Activated T-helper 2 cell treated with anti-CD3 and anti-CD28 coated beads, Interferon-gamma antibody, Interleukin-2, Interleukin-4, amounts not matched to agents 10 μg/mL and 5 μg/mL and 100 μg/mL, durations not matched to agents 14 hours and 24 hours and 36 hours (primary cell): ENCODE measurements at regions of chr2 and their contacts with region 1.

Region 1: DNA sequence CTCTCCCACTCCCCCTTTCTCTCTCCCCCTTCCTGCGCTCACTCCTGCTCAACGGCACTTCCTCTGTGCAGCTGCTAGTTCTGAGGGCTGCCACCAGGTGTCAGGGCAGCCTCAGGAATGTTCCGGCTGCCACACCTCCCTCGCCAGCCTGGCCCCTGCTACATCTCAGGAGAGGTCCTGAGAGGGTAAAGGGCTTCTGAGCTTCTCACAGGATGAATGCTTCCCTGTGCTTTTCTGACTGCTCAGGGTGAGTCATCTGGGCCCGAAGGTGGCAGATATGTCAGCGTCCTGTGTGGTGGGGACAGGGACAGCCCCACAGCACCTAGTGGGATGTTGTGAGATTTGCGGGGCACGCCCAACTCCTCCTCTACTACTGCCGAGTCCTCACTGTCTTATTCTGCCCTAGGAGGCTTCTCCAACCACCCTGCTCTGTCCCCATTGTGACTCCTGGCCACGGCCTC is 49.0 kb downstream of the PLEKHB2 start:
- DNase-seq: peak; percentile 50
- H3K4me3 Mint-ChIP-seq: no peak overlapping the region
- H3K27ac Mint-ChIP-seq: no peak overlapping the region
- H3K4me1 Mint-ChIP-seq: peaks cover 21% of the 10 kb centered on the region
- H3K27me3 Mint-ChIP-seq: peaks cover 5% of the 10 kb centered on the region

Region 2: GRCh38 chr2:131673392-131674173 is 519.5 kb after region 1 on chr2:
- intact Hi-C with region 1: loop called (anchors 2 kb)
- DNase-seq: peak; percentile 56
- H3K4me3 Mint-ChIP-seq: no peak overlapping the region
- H3K27ac Mint-ChIP-seq: no peak overlapping the region
- H3K4me1 Mint-ChIP-seq: peaks cover 4% of the 10 kb centered on the region
- H3K27me3 Mint-ChIP-seq: peaks cover 34% of the 10 kb centered on the region

Region 3: DNA sequence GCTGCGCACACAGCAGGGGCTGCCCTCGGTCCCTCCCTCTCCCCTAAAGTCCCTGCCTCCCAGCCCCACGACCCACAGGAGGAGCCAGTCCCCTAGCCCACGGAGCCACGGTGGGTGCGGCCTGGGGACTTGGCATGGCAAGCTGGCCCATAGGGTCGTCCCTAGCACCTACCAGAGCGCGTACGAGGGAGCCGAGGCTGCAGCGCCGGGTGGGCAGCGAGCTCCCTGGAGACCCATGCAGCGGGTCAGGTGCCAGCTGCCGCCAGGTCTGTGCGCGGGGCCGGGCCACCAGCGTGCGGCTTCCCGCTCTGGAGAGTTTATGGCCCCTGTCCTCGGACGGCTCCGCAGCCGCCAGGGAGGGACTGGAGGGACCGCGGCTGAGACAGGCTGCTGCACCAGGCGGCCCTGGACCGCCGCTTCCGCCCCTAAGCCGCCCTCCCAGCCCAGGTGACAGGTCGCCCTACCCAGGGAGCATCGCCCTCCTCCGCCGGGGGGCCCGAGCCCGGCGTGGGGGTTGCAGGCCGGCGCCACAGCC is 647.2 kb after region 1 on chr2:
- intact Hi-C with region 1: loop called (anchors 2 kb)
- DNase-seq: no peak
- H3K4me3 Mint-ChIP-seq: no peak overlapping the region
- H3K27ac Mint-ChIP-seq: no peak overlapping the region
- H3K4me1 Mint-ChIP-seq: peaks cover 3% of the 10 kb centered on the region
- H3K27me3 Mint-ChIP-seq: peaks cover 10% of the 10 kb centered on the region